ENCODE measurements at regions of chr16 and their contacts with region 1.

Region 1: GRCh38 chr16:68961778-68962402 is 118.6 kb downstream of the TANGO6 start:
- DNase-seq: no peak
- ATAC-seq: peak in 2 of 4 donors; percentile 47 to 75
- H3K4me3 ChIP-seq: no peak overlapping the region
- H3K27ac ChIP-seq: peak overlapping the region in 9 of 12 donors; percentile 5 to 73 (median 48)
- H3K4me1 ChIP-seq: peaks cover 0 to 16% (median 0%) of the 10 kb centered on the region in 12 donors
- H3K27me3 ChIP-seq: no peaks in the 10 kb centered on the region
- CTCF ChIP-seq: no peak
- POLR2A ChIP-seq: no peak

Region 2: DNA sequence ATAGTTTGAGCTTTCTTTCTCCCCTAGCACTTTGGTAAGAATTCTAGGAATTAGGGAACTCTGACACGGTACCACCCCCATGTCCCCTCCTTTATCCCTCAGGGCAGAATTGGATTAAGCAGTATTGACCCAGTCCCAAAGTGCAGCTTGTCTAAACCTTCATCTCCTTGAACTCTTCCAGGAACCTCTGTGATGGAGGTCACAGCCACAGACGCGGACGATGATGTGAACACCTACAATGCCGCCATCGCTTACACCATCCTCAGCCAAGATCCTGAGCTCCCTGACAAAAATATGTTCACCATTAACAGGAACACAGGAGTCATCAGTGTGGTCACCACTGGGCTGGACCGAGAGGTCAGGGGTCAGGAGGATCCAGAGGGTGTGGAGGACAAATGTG is 150.4 kb before region 1 on chr16:
- intact Hi-C with region 1: no loop called
- DNase-seq: no peak
- ATAC-seq: no peak
- H3K4me3 ChIP-seq: no peak overlapping the region
- H3K27ac ChIP-seq: no peak overlapping the region
- H3K4me1 ChIP-seq: no peaks in the 10 kb centered on the region
- H3K27me3 ChIP-seq: peaks cover 0 to 10% (median 0%) of the 10 kb centered on the region in 9 donors
- CTCF ChIP-seq: no peak
- POLR2A ChIP-seq: no peak

Region 3: GRCh38 chr16:68902008-68902968 is 59.6 kb before region 1 on chr16:
- intact Hi-C with region 1: loop called in 1 of 10 experiments (anchors 10 kb)
- DNase-seq: peak in 1 of 5 donors; percentile 7
- ATAC-seq: peak in 3 of 4 donors; percentile 52 to 60 (median 54)
- H3K4me3 ChIP-seq: no peak overlapping the region
- H3K27ac ChIP-seq: no peak overlapping the region
- H3K4me1 ChIP-seq: peaks cover 0 to 6% (median 0%) of the 10 kb centered on the region in 12 donors
- H3K27me3 ChIP-seq: no peaks in the 10 kb centered on the region
- CTCF ChIP-seq: peak; percentile 49 to 73 (median 62)
- POLR2A ChIP-seq: no peak

Region 4: GRCh38 chr16:69017036-69017783 is 55.3 kb after region 1 on chr16:
- intact Hi-C with region 1: no loop called
- DNase-seq: no peak
- ATAC-seq: peak in 1 of 4 donors; percentile 62
- H3K4me3 ChIP-seq: no peak overlapping the region
- H3K27ac ChIP-seq: peak overlapping the region in 8 of 12 donors; percentile 2 to 59 (median 24)
- H3K4me1 ChIP-seq: peaks cover 0 to 13% (median 0%) of the 10 kb centered on the region in 12 donors
- H3K27me3 ChIP-seq: no peaks in the 10 kb centered on the region
- CTCF ChIP-seq: no peak
- POLR2A ChIP-seq: no peak

Region 5: GRCh38 chr16:69064764-69065313 is 102.9 kb after region 1 on chr16:
- intact Hi-C with region 1: no loop called
- DNase-seq: peak in 1 of 5 donors; percentile 48
- ATAC-seq: peak in 3 of 4 donors; percentile 63 to 82 (median 66)
- H3K4me3 ChIP-seq: no peak overlapping the region
- H3K27ac ChIP-seq: no peak overlapping the region
- H3K4me1 ChIP-seq: peaks cover 0 to 13% (median 2%) of the 10 kb centered on the region in 12 donors
- H3K27me3 ChIP-seq: no peaks in the 10 kb centered on the region
- CTCF ChIP-seq: no peak
- POLR2A ChIP-seq: no peak

Region 6: GRCh38 chr16:69204172-69204571 is 242.3 kb after region 1 on chr16:
- intact Hi-C with region 1: no loop called
- DNase-seq: no peak
- ATAC-seq: peak in 2 of 4 donors; percentile 28 to 51
- H3K4me3 ChIP-seq: no peak overlapping the region
- H3K27ac ChIP-seq: peak overlapping the region in 2 of 12 donors; percentile 41 to 42
- H3K4me1 ChIP-seq: peaks cover 0 to 29% (median 4%) of the 10 kb centered on the region in 12 donors
- H3K27me3 ChIP-seq: no peaks in the 10 kb centered on the region
- CTCF ChIP-seq: no peak
- POLR2A ChIP-seq: no peak

Measured in heart left ventricle (tissue), 16 donors.